ENCODE measurements at regions of chr11 and their contacts with region 1.

Region 1: DNA sequence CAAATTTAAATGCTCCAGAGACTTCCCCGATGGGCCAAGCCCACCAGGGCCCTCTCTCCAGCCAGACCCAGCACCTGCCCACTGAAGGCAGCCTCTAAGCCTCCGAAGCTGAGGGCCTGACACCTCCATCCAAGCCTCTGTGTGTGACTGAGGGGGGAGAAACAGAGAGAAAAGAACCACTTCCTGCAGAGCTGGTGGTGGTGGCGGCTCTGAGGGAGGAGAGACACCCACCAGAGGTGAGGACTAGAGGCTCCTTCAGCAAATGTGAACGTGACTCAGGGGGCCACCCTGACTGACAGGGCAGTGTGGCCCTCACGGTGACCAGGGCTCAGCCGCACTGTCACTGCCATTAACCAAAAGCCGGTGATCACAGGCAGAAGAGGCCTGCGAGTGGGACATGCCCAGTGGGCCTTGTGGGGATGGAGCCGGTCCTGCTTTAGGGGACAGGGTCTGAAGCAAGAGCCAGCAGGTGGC is 31.0 kb upstream of the CD5 start:
- DNase-seq: no peak
- H3K4me3 ChIP-seq: no peak overlapping the region
- H3K27ac ChIP-seq: no peak overlapping the region
- H3K4me1 ChIP-seq: no peaks in the 10 kb centered on the region
- H3K27me3 ChIP-seq: no peaks in the 10 kb centered on the region
- CTCF ChIP-seq: no peak

Region 2: DNA sequence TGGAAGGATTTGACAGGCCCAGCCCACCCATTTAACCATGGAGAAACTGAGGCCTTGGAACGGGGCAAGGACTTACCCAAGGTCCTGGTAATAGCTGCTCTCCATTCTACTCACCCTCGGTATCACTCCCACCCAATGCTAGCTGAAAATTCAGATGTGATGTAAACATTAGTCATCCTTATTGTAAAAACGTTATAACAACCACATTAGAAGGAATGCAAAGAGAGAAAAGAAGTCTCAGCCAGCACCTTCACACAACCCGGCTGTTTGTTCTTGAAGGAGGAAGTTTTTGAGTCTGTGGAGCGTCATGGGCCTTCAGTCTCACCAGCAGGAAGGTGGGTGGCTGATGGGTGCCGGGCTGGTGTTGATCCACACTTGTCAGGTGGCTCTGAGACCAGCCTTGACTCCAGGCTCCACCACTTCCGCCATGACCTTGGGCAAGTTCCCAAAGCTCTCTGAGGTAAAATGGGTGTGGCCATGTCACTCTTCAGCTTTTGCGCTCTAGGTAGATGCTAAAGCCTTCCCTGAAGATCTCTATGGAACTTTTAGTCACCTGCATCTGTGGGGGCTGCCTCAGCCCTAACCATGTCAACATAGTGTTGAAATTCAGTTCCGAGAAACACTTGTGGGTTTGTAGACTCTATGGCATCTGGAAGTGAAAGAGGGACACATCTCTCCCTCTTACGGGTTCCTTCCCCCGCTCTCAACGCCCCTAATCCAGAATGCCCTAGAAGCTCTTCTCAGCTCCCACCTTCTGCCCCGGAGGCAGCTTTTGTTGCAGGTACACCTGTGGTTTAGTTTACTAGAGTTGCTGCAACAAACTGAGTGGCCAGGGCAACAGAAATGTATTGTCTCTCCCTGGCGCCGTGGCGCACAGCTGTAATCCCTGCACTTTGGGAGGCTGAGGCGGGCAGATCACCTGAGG is 85.0 kb before region 1 on chr11:
- CTCF ChIA-PET with region 1: no interaction called
- POLR2A ChIA-PET with region 1: interaction called, 10 read pairs
- intact Hi-C with region 1: no loop called
- DNase-seq: no peak
- H3K4me3 ChIP-seq: no peak overlapping the region
- H3K27ac ChIP-seq: no peak overlapping the region
- H3K4me1 ChIP-seq: no peaks in the 10 kb centered on the region
- H3K27me3 ChIP-seq: no peaks in the 10 kb centered on the region
- CTCF ChIP-seq: no peak

Measured in A673 (cell line).